PC-9 (cell line): ENCODE measurements at regions of chr14 and their contacts with region 1.

Region 1: GRCh38 chr14:54773171-54773975 is 129.3 kb downstream of the GCH1 start:
- DNase-seq: peak; percentile 89 to 97
- H3K4me3 ChIP-seq: peak overlapping the region; percentile 40; the same call in 1 of the 2 replicates
- H3K27ac ChIP-seq: peak overlapping the region; percentile 89
- H3K4me1 ChIP-seq: peaks cover 24% of the 10 kb centered on the region
- H3K27me3 ChIP-seq: no peaks in the 10 kb centered on the region
- CTCF ChIP-seq: peak; percentile 77

Region 2: GRCh38 chr14:53963320-53964227 is 809.8 kb before region 1 on chr14:
- CTCF ChIA-PET with region 1: no interaction called
- POLR2A ChIA-PET with region 1: no interaction called
- intact Hi-C with region 1: no loop called
- DNase-seq: peak in 1 of 2 experiments; percentile 50
- H3K4me3 ChIP-seq: no peak overlapping the region
- H3K27ac ChIP-seq: no peak overlapping the region
- H3K4me1 ChIP-seq: no peaks in the 10 kb centered on the region
- H3K27me3 ChIP-seq: no peaks in the 10 kb centered on the region
- CTCF ChIP-seq: no peak

Region 3: DNA sequence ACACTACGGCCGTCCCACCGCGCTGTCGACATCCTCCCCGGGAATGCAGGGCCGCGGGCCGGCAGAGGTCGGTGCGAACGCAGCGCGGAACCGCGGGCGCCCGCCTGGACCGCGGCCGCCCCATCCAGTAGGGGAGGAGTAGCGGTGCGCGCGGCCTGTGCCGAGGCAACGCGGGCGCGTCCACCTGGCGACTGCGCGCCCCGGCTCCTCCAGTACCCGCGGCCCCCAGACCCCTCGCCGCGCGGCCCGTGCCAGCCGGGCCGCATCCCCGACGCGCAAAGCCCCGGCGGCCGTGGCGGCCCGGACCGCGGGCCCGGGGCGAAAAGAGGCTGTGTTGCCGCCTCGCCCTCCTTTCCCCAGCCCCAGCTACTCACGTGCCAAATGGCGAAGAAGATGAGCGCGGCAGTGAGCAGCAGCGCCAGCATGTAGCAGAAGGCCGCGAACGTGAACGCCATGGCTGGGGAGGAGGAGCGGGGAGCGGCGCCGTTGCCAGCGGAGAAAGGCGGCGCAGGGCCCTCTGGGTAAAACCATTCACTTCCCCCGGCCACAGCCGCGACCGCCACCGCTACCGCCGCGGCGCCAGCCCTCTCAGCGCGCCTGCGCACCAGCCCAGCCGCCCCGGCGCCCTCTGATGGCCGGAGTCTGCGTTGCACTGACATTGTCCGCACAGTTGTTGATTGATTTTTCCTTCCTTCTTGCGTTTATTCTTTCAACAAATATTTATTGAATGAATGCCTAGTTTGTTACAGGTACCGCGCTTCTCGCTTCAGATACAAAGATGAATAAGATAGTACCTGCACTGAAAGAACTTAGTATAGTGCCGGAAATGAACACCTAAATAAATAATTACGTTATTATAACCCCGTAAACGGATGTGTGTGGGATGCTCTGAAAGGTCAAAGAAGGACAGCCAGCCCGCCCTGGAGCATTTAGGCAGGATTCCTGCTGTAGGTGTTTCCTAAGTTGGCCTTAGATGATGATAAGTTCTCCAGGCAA is 332.2 kb before region 1 on chr14 and contains the start of gene CNIH1:
- CTCF ChIA-PET with region 1: no interaction called
- POLR2A ChIA-PET with region 1: no interaction called
- intact Hi-C with region 1: loop called (anchors 10 kb)
- DNase-seq: peak; percentile 74 to 93
- H3K4me3 ChIP-seq: peak within 1 kb of the TSS; percentile 72
- H3K27ac ChIP-seq: peak within 1 kb of the TSS; percentile 73
- H3K4me1 ChIP-seq: peaks cover 37% of the 10 kb centered on the region
- H3K27me3 ChIP-seq: no peaks in the 10 kb centered on the region
- CTCF ChIP-seq: peak; percentile 88
- total RNA-seq, gene CNIH1: 70.6 and 114 TPM in 2 replicates

Region 4: DNA sequence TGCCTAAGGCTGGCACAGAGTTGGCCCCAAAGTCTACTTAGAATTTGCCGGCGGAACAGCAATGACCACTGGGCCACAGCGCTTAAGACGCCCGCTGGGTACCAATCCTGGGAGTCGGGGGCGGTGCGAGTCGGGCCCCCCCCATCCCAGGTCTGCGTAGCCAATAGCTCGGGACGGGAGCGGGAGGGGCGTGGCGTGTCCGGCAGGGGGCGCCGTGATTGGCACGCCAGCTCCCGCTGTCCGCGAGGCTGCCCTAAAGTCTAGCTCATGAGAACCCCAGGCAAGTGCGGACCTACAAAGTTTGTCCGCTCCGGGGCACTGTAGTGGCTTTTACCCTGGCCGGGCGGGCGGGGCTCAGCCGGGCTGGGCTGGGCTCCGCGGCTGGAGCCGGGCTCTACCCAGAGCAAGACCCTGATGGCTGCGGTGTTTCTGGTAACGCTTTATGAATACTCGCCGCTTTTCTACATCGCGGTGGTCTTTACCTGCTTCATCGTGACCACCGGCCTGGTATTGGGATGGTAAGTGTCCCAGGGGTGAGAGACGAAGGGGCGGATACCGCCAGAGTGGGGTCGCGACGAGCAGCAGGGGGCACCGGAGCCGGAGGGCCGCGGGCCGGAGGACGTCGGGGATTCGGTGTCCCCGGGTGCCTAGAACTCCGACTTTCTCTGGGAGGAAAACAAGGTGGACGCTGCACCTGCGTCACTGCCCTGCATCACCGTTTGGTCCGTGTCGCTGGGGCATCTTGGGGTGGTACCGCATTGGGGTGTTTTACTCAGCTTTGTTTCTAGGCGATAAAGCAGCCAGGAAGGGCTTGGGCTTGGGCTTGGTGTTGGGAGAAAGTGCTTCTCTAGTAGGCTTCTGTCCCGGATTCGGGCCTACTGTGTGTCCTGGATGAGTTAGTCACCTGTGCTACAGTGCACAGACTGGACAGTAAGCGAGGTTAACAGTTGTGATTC is 263.5 kb before region 1 on chr14 and contains the start of gene CGRRF1:
- CTCF ChIA-PET with region 1: no interaction called
- POLR2A ChIA-PET with region 1: no interaction called
- intact Hi-C with region 1: loop called (anchors 10 kb)
- DNase-seq: peak; percentile 92 to 98
- H3K4me3 ChIP-seq: peak within 1 kb of the TSS; percentile 79
- H3K27ac ChIP-seq: no peak within 1 kb of the TSS
- H3K4me1 ChIP-seq: peaks cover 9% of the 10 kb centered on the region
- H3K27me3 ChIP-seq: no peaks in the 10 kb centered on the region
- CTCF ChIP-seq: peak; percentile 79
- total RNA-seq, gene CGRRF1: 10.3 and 11.3 TPM in 2 replicates

Region 5: DNA sequence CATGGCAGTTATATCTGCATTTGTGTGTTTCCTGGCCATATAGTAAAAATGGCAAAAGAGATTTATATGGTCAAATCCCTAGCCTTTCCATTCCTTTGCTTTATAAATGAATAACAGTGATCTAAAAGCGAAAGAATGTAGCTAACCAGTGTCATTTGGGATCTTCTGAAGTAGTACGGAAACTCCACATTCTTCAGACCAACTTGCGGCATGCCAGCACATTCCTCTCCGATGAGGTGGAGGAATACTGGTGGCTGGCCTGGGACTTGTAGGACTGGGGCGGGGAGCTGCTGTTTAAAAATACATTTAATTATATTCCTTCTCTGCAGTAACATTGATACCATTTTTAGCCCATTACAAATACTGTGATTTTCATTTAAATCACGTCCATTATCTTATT is 121.2 kb before region 1 on chr14:
- CTCF ChIA-PET with region 1: interaction called, 3 read pairs
- POLR2A ChIA-PET with region 1: no interaction called
- intact Hi-C with region 1: loop called (anchors 1 kb)
- DNase-seq: peak; percentile 84 to 98
- H3K4me3 ChIP-seq: peak overlapping the region; percentile 42; the same call in 1 of the 2 replicates
- H3K27ac ChIP-seq: peak overlapping the region; percentile 96
- H3K4me1 ChIP-seq: peaks cover 66% of the 10 kb centered on the region
- H3K27me3 ChIP-seq: no peaks in the 10 kb centered on the region
- CTCF ChIP-seq: no peak

Region 6: GRCh38 chr14:54691525-54692283 is 81.7 kb before region 1 on chr14:
- CTCF ChIA-PET with region 1: interaction called, 10 read pairs
- POLR2A ChIA-PET with region 1: no interaction called
- intact Hi-C with region 1: loop called (anchors 2 kb)
- DNase-seq: peak; percentile 49 to 73
- H3K4me3 ChIP-seq: no peak overlapping the region
- H3K27ac ChIP-seq: no peak overlapping the region
- H3K4me1 ChIP-seq: peaks cover 4% of the 10 kb centered on the region
- H3K27me3 ChIP-seq: no peaks in the 10 kb centered on the region
- CTCF ChIP-seq: peak; percentile 87

Region 7: GRCh38 chr14:54737132-54737711 is 36.2 kb before region 1 on chr14:
- CTCF ChIA-PET with region 1: interaction called, 4 read pairs
- POLR2A ChIA-PET with region 1: no interaction called
- intact Hi-C with region 1: loop called (anchors 1 kb)
- DNase-seq: peak; percentile 38 to 84
- H3K4me3 ChIP-seq: no peak overlapping the region
- H3K27ac ChIP-seq: peak overlapping the region; percentile 13; the same call in 1 of the 2 replicates
- H3K4me1 ChIP-seq: peaks cover 16% of the 10 kb centered on the region
- H3K27me3 ChIP-seq: no peaks in the 10 kb centered on the region
- CTCF ChIP-seq: no peak

Region 8: DNA sequence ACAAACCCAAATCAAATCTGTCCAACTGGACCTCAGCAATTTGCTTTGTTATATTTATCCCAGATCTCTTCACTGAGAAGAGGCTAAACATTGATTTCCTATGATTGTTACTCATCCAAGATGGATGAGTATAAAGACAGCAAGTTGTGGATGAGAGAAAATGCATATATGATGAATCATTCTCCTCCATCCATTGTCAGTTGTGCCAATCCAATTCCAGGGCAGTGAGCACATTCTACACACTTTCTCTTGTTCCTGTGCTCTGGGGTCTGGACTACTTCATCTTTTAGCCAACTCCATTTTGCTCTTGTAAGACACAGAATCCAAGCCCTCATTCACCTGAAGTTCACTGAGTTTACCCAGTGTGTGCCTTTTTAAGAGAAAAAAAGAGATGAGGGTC is 23.6 kb after region 1 on chr14:
- CTCF ChIA-PET with region 1: no interaction called
- POLR2A ChIA-PET with region 1: no interaction called
- intact Hi-C with region 1: no loop called
- DNase-seq: no peak
- H3K4me3 ChIP-seq: no peak overlapping the region
- H3K27ac ChIP-seq: no peak overlapping the region
- H3K4me1 ChIP-seq: no peaks in the 10 kb centered on the region
- H3K27me3 ChIP-seq: no peaks in the 10 kb centered on the region
- CTCF ChIP-seq: no peak